ENCODE measurements at regions of chr5 and their contacts with region 1.

Region 1: GRCh38 chr5:56838409-56839039 is 23.2 kb downstream of the MAP3K1 start:
- DNase-seq: peak in 2 of 9 experiments; percentile 68 to 76
- ATAC-seq: peak; percentile 74
- H3K4me3 ChIP-seq: no peak overlapping the region
- H3K4me3 Mint-ChIP-seq: peak overlapping the region; percentile 42
- H3K27ac ChIP-seq: no peak overlapping the region
- H3K27ac Mint-ChIP-seq: peak overlapping the region; percentile 75
- H3K4me1 ChIP-seq: peaks cover 20% of the 10 kb centered on the region
- H3K4me1 Mint-ChIP-seq: peaks cover 79% of the 10 kb centered on the region
- H3K27me3 ChIP-seq: no peaks in the 10 kb centered on the region
- H3K27me3 Mint-ChIP-seq: no peaks in the 10 kb centered on the region
- CTCF ChIP-seq: peak; percentile 60

Region 2: DNA sequence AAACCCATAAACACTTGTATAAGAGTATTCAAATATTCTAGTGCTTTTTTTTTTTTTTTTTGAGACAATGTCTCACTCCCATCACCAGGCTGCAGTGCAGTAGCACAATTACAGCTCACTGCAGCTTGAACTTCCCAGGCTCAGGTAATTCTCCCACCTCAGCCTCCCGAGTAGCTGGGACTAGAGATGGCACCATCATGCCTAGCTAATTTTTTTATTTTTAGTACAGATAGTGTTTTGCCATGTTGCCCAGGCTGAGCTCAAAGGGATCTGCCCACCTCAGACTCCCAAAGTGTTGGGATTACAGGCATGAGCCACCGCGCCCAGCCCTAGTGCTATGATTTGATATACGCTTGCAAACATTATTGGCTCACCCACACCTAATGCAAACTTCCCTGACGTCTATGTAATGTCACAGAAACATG is 855.6 kb before region 1 on chr5:
- CTCF ChIA-PET with region 1: no interaction called
- POLR2A ChIA-PET with region 1: no interaction called
- intact Hi-C with region 1: loop called in 1 of 2 experiments (anchors 1 kb)
- DNase-seq: peak in 4 of 9 experiments; percentile 18 to 62 (median 42)
- ATAC-seq: peak; percentile 35
- H3K4me3 ChIP-seq: no peak overlapping the region
- H3K4me3 Mint-ChIP-seq: peak overlapping the region; percentile 59
- H3K27ac ChIP-seq: no peak overlapping the region
- H3K27ac Mint-ChIP-seq: peak overlapping the region; percentile 64
- H3K4me1 ChIP-seq: peaks cover 56% of the 10 kb centered on the region
- H3K4me1 Mint-ChIP-seq: peaks cover 69% of the 10 kb centered on the region
- H3K27me3 ChIP-seq: no peaks in the 10 kb centered on the region
- H3K27me3 Mint-ChIP-seq: no peaks in the 10 kb centered on the region
- CTCF ChIP-seq: peak; percentile 50

Region 3: DNA sequence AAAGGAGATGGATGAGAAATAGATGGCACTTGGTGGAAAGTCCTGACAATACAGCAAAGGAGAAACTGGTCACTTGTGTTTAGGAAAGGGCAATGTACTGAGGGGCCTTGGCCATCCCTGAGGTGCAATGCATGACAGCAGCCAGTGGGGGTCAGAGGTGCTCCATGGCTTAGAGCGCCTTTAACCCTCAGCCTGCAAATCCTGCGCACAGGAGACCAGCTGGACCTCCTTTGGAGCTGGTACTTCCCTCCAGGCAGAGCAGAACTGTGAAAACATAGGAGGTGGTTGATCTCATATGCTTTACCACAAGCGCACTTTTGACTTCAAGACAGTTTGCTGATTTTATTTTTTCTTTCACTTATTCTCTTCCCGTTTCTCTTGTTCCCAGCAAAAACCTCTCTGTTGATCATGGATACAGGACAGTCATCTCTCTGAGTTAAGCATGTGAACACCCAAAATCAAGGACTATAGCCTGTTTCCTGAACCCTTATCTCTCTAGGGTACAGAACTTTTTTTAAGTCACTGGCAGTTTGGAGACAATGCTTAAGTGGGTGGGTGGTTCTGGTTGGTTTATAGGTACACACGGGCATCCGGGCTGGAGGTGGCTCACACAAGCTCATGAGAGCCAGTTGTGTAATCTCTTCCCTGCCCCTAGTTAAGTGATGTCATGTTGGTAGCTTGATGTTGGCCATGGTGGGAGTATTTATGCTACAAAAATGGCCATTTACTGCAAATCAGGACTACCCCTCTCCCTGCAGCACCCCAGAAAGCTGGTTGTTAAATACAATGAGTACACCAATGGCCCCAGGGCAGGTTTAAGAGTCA is 567.7 kb before region 1 on chr5:
- CTCF ChIA-PET with region 1: interaction called, 89 read pairs
- POLR2A ChIA-PET with region 1: interaction called, 10 read pairs
- intact Hi-C with region 1: loop called (anchors 1 kb)
- DNase-seq: peak; percentile 45 to 82 (median 72)
- ATAC-seq: peak; percentile 98
- H3K4me3 ChIP-seq: no peak overlapping the region
- H3K4me3 Mint-ChIP-seq: no peak overlapping the region
- H3K27ac ChIP-seq: no peak overlapping the region
- H3K27ac Mint-ChIP-seq: peak overlapping the region; percentile 2
- H3K4me1 ChIP-seq: peaks cover 5% of the 10 kb centered on the region
- H3K4me1 Mint-ChIP-seq: peaks cover 8% of the 10 kb centered on the region
- H3K27me3 ChIP-seq: no peaks in the 10 kb centered on the region
- H3K27me3 Mint-ChIP-seq: peaks cover 3% of the 10 kb centered on the region
- CTCF ChIP-seq: peak; percentile 95

Region 4: DNA sequence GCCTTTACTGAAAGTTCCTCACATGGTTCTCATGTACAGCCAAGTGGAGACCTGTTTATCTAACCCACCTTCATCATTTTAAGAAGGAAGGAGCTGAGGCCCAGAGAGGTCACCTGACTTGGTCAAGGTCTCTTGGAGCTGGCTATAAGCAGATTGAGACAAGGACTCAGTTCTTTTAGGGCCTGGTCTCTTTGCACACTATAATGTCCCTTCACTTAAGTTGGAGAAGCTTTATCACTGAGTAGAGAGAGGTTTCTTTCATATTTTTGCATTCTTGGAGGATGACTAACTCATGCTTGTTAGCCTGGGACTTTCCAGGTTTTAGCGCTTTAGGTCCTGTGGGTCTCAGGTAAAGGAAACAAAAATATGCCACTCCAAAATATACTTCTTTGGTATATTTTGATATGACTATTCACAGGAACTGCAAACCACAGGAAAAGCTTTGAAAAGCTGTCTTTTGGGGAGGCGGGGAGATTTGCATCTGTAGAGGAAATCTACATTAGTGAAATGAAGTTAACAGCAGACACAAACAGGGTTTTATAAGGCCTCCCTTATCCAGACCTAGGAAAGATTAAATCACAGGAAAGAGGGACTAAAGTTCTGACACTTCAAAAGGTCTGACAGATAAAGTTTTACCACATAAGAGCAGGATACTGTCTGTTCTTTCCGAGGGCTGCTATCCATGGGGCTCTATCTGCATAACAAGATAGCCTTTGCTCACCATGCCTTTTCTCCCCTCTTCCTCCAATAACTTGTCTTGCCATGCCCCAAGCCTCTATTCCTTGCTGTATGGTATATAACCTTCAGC is 509.6 kb before region 1 on chr5:
- CTCF ChIA-PET with region 1: interaction called, 3 read pairs
- POLR2A ChIA-PET with region 1: no interaction called
- intact Hi-C with region 1: loop called in 1 of 2 experiments (anchors 5 kb)
- DNase-seq: peak in 5 of 9 experiments; percentile 5 to 76 (median 42)
- ATAC-seq: peak; percentile 67
- H3K4me3 ChIP-seq: no peak overlapping the region
- H3K4me3 Mint-ChIP-seq: peak overlapping the region; percentile 29
- H3K27ac ChIP-seq: peak overlapping the region in 1 of 2 experiments; percentile 33
- H3K27ac Mint-ChIP-seq: peak overlapping the region; percentile 49
- H3K4me1 ChIP-seq: peaks cover 46% of the 10 kb centered on the region
- H3K4me1 Mint-ChIP-seq: peaks cover 50% of the 10 kb centered on the region
- H3K27me3 ChIP-seq: peaks cover 0 to 2% of the 10 kb centered on the region in 2 experiments
- H3K27me3 Mint-ChIP-seq: no peaks in the 10 kb centered on the region
- CTCF ChIP-seq: no peak

Region 5: GRCh38 chr5:56807679-56808078 is 30.8 kb before region 1 on chr5:
- CTCF ChIA-PET with region 1: no interaction called
- POLR2A ChIA-PET with region 1: no interaction called
- intact Hi-C with region 1: no loop called
- DNase-seq: no peak
- ATAC-seq: no peak
- H3K4me3 ChIP-seq: no peak overlapping the region
- H3K4me3 Mint-ChIP-seq: no peak overlapping the region
- H3K27ac ChIP-seq: no peak overlapping the region
- H3K27ac Mint-ChIP-seq: no peak overlapping the region
- H3K4me1 ChIP-seq: no peaks in the 10 kb centered on the region
- H3K4me1 Mint-ChIP-seq: peaks cover 7% of the 10 kb centered on the region
- H3K27me3 ChIP-seq: no peaks in the 10 kb centered on the region
- H3K27me3 Mint-ChIP-seq: no peaks in the 10 kb centered on the region
- CTCF ChIP-seq: no peak

Region 6: DNA sequence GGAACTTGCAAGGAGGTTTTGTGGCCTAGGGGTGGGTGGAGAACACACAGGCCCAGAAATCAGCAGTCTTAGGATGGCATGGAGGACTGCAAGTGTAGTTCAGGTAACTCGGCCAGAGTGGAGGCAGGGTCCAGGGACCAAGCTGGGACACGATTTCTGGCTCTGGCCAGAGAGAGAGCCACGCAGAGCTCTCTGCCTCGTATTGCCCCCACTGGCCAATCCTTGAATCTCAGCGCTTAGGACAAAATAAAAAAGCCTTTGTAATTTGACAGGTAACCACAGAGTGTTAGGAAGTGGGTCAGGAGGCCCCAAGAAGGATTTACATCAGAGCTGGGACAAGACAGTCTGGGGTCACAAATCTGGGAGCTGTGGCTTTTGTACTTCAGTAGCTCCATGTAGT is 11.5 kb before region 1 on chr5:
- CTCF ChIA-PET with region 1: interaction called, 16 read pairs
- POLR2A ChIA-PET with region 1: interaction called, 3 read pairs
- intact Hi-C with region 1: no loop called
- DNase-seq: peak in 2 of 9 experiments; percentile 22 to 41
- ATAC-seq: peak; percentile 32
- H3K4me3 ChIP-seq: no peak overlapping the region
- H3K4me3 Mint-ChIP-seq: no peak overlapping the region
- H3K27ac ChIP-seq: no peak overlapping the region
- H3K27ac Mint-ChIP-seq: peak overlapping the region; percentile 70
- H3K4me1 ChIP-seq: peaks cover 71% of the 10 kb centered on the region
- H3K4me1 Mint-ChIP-seq: peaks cover 90% of the 10 kb centered on the region
- H3K27me3 ChIP-seq: no peaks in the 10 kb centered on the region
- H3K27me3 Mint-ChIP-seq: no peaks in the 10 kb centered on the region
- CTCF ChIP-seq: peak; percentile 14